ENCODE measurements at regions of chr19 and their contacts with region 1.

Region 1: DNA sequence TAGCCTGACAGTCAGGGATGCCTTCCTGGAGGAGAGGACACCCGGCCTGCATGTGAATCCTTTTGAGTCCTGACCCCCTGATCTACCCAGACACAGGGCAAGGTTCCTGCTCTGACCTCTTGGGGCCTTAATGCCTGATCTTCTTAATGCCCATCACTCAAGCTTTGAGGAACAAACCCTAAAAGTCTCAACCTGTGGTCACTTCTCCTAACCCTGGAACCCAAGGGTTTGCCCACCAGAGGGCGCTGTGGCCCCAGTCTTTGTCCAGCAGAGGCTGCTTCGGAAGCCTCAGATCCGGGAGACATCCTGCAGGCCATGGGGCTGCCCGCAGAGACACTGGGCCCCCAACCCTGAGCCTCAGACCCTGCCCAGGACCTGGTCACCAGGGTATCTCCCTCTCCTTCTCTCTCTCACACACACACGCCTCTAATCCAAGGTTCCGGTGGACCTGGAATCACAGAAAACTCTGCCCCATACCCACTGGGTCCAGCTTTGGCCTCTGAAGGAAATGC is 9.8 kb upstream of the DPF1 start:
- DNase-seq: peak; percentile 80
- H3K4me3 Mint-ChIP-seq: no peak overlapping the region
- H3K27ac Mint-ChIP-seq: no peak overlapping the region
- H3K4me1 Mint-ChIP-seq: peaks cover 9% of the 10 kb centered on the region
- H3K27me3 Mint-ChIP-seq: peaks cover 25% of the 10 kb centered on the region

Region 2: DNA sequence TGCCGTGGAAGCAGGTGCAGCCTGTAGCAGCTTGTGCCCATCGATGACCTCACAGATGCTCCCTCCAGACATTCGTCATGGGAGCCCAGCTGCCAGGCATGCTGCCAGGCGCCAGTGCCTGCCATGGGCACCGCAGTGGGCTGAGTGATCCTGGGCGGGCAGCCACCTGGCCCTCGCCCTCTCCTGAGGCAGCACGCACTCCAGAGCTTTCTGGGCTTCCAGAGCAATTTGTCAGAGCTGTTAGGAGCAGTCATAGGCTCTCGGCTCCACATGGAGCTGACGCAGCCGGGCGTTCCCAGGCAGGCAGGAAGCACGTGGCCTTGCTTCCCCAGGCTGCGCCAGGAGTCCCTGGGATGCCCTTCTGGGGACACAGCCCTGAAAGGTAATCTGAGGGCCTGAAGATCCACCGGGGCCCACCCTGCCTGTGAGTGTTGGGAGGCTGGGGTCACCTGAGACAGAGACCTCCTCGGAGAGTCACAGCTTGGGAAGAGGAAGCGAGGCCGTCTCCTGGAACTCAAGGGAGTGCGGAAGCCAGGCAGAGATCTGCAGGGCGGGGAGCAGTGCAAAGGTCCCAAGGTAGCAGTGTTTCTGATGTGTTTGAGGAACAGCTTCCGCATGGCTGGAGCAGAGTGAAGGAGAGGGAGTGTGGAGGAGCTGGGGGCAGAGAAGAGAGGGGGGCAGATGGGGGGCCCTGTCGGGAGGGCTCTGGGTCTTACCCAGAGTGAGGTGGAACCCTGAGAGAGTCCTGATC is 60.3 kb before region 1 on chr19:
- CTCF ChIA-PET with region 1: no interaction called
- POLR2A ChIA-PET with region 1: no interaction called
- DNase-seq: no peak
- H3K4me3 Mint-ChIP-seq: no peak overlapping the region
- H3K27ac Mint-ChIP-seq: no peak overlapping the region
- H3K4me1 Mint-ChIP-seq: no peaks in the 10 kb centered on the region
- H3K27me3 Mint-ChIP-seq: no peaks in the 10 kb centered on the region

Region 3: GRCh38 chr19:38263689-38264485 is 30.1 kb after region 1 on chr19:
- CTCF ChIA-PET with region 1: no interaction called
- POLR2A ChIA-PET with region 1: no interaction called
- DNase-seq: no peak
- H3K4me3 Mint-ChIP-seq: peak overlapping the region; percentile 74
- H3K27ac Mint-ChIP-seq: peak overlapping the region; percentile 86
- H3K4me1 Mint-ChIP-seq: peaks cover 23% of the 10 kb centered on the region
- H3K27me3 Mint-ChIP-seq: peaks cover 1% of the 10 kb centered on the region

Region 4: GRCh38 chr19:38335949-38336637 is 102.3 kb after region 1 on chr19:
- CTCF ChIA-PET with region 1: interaction called, 10 read pairs
- POLR2A ChIA-PET with region 1: interaction called, 6 read pairs
- DNase-seq: peak; percentile 97
- H3K4me3 Mint-ChIP-seq: peak overlapping the region; percentile 88
- H3K27ac Mint-ChIP-seq: peak overlapping the region; percentile 97
- H3K4me1 Mint-ChIP-seq: peaks cover 20% of the 10 kb centered on the region
- H3K27me3 Mint-ChIP-seq: no peaks in the 10 kb centered on the region

Region 5: DNA sequence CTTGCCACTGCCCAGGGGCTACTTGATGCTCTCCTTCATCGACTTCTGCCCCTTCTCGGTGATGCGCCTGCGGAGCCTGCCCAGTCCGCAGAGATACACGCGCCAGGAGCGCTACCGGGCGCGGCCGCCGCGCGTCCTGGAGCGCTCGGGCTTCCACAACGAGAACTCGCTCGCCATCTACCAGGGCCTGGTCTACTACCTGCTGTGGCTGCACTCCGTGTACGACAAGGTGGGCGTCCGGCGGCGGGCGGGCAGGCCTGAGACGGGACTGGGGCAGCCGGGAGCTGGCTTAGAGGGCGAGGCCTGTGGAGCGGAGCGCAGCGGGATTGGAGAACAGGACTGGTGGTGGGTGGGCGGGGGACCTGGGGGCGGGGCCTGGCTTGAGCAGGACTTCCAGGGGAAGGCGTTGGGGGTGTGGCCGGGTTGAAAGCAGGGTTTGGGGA is 127.9 kb after region 1 on chr19:
- CTCF ChIA-PET with region 1: no interaction called
- POLR2A ChIA-PET with region 1: no interaction called
- DNase-seq: peak; percentile 78
- H3K4me3 Mint-ChIP-seq: peak overlapping the region; percentile 81
- H3K27ac Mint-ChIP-seq: peak overlapping the region; percentile 31
- H3K4me1 Mint-ChIP-seq: peaks cover 19% of the 10 kb centered on the region
- H3K27me3 Mint-ChIP-seq: peaks cover 34% of the 10 kb centered on the region